Mucosa of descending colon (tissue), 3 donors: ENCODE measurements at regions of chr20 and their contacts with region 1.

Region 1: GRCh38 chr20:41339507-41340326 is 904 bp upstream of the LPIN3 start:
- DNase-seq: peak; percentile 94 to 98 (median 97)
- ATAC-seq: peak; percentile 89
- H3K4me3 ChIP-seq: no peak overlapping the region
- H3K4me1 ChIP-seq: peaks cover 17% of the 10 kb centered on the region
- CTCF ChIP-seq: peak; percentile 98

Region 2: DNA sequence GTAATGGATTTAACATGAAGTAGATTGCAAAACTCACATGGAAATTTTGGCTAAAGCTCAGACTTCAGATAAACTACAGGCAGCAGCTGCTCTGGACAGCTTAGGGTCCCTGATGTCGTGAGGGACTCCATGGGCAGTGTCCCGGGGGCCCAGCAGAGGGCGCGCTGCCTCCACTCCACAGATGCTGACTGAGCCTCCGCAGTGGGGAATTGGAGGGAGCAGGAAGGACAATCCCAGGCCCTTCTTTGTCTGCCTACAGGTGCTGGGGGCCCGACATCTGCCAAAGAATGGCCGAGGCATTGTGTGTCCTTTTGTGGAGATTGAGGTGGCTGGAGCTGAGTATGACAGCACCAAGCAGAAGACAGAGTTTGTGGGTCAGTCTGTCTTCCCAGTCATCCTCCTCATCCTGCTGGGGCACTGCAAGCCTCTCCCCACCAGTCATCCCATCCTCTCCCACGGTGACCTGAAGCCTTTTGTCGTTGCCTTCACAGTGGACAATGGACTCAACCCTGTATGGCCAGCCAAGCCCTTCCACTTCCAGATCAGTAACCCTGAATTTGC is 166.5 kb before region 1 on chr20:
- intact Hi-C with region 1: loop called (anchors 2 to 10 kb)
- DNase-seq: peak; percentile 78 to 88 (median 88)
- ATAC-seq: peak; percentile 92
- H3K4me3 ChIP-seq: no peak overlapping the region
- H3K4me1 ChIP-seq: peaks cover 4% of the 10 kb centered on the region
- CTCF ChIP-seq: peak; percentile 88

Region 3: GRCh38 chr20:41249406-41250281 is 90.1 kb before region 1 on chr20:
- intact Hi-C with region 1: loop called in 1 of 2 experiments (anchors 10 kb)
- DNase-seq: peak; percentile 30 to 66 (median 36)
- ATAC-seq: peak; percentile 60
- H3K4me3 ChIP-seq: no peak overlapping the region
- H3K4me1 ChIP-seq: peaks cover 20% of the 10 kb centered on the region
- CTCF ChIP-seq: no peak

Region 4: GRCh38 chr20:41436679-41437078 is 97.0 kb after region 1 on chr20:
- intact Hi-C with region 1: no loop called
- DNase-seq: no peak
- ATAC-seq: no peak
- H3K4me3 ChIP-seq: no peak overlapping the region
- H3K4me1 ChIP-seq: no peaks in the 10 kb centered on the region
- CTCF ChIP-seq: no peak